HEK293 (cell line): ENCODE measurements at regions of chr4 and their contacts with region 1.

Region 1: DNA sequence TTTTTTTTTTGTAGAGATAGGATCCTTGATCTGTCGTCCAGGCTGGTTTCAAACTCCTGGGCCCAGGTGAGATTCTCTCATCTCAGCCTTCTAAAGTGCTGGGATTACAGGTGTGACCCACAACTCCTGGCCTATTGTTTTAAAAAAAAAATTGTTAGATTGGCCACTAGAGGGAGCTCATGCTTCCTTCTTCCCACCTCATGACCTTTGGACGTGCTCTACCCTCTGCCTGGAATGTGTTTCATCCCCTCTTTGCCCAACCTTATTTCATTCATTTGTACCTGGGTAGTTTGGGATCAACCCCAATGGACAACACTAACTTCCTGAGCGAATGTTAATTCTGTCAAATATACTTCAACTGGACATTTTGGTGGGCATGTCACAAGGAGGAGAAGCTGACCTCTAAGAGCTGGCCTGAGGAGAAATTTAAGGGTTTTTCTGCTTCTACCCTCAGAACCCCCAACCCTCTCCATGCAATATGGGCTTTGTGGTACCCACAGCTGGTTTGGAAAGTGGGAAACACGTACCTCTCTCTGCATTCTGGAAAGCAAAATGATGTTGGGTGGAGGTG is 6.4 kb downstream of the PPEF2 start:
- H3K4me3 ChIP-seq: no peak overlapping the region
- H3K27ac ChIP-seq: no peak overlapping the region
- H3K4me1 ChIP-seq: no peaks in the 10 kb centered on the region
- CTCF ChIP-seq: 0 out of 2 replicates have a peak, but pooled peaks have one; percentile 12

Region 2: GRCh38 chr4:75908555-75908954 is 12.7 kb after region 1 on chr4:
- CTCF ChIA-PET with region 1: interaction called, 15 read pairs
- POLR2A ChIA-PET with region 1: no interaction called
- H3K4me3 ChIP-seq: no peak overlapping the region
- H3K27ac ChIP-seq: no peak overlapping the region
- H3K4me1 ChIP-seq: no peaks in the 10 kb centered on the region
- CTCF ChIP-seq: no peak

Region 3: GRCh38 chr4:76011700-76012387 is 116.0 kb after region 1 on chr4:
- CTCF ChIA-PET with region 1: no interaction called
- POLR2A ChIA-PET with region 1: no interaction called
- H3K4me3 ChIP-seq: no peak overlapping the region
- H3K27ac ChIP-seq: no peak overlapping the region
- H3K4me1 ChIP-seq: no peaks in the 10 kb centered on the region
- CTCF ChIP-seq: no peak